CD4-positive, alpha-beta T cell (primary cell): ENCODE measurements at regions of chr6 and their contacts with region 1.

Region 1: DNA sequence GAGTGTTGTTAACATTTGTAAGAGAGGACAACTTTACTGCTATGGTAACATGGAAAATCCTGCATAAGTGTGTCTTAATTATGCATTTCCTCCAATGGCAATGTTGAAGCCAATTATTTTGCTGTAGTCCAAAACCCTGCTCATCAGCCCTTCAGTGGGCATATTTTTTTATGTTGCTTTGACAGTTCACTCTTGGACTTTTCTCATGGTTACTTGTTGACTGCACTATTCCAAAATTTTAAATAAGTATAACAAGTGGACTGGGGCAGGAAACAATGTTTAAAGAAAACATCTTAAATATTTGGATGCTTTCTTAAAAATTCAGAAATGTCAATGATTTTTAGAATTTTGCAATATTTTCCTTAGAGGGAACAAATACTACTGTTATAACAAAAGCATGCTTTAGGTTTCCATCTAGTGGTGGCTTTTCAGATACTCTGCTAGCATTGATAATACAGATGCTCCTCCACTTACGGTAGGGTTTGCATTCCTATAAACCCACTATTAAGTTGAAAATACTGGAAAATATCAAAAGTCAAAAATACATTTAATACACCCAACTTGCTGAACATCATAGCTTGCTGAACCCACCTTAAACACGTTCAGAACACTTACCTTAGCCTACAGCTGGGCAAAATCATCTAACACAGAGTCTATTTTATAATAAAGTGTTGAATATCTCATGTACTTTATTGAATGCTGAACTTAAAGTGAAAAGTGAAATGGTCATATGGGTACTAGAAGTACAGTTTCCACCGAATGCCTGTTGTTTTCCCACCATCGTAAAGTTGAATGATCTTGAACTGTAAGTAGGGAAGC is 86.4 kb downstream of the ADGRG6 start:
- DNase-seq: peak in 3 of 14 experiments; percentile 42 to 56 (median 50)
- ATAC-seq: peak; percentile 57
- H3K4me3 ChIP-seq: no peak overlapping the region
- H3K4me3 Mint-ChIP-seq: no peak overlapping the region
- H3K27ac ChIP-seq: no peak overlapping the region
- H3K27ac Mint-ChIP-seq: no peak overlapping the region
- H3K4me1 ChIP-seq: no peaks in the 10 kb centered on the region
- H3K4me1 Mint-ChIP-seq: peaks cover 14% of the 10 kb centered on the region
- H3K27me3 ChIP-seq: no peaks in the 10 kb centered on the region
- H3K27me3 Mint-ChIP-seq: no peaks in the 10 kb centered on the region
- CTCF ChIP-seq: peak; percentile 74

Region 2: GRCh38 chr6:141988954-141989705 is 399.1 kb before region 1 on chr6:
- CTCF ChIA-PET with region 1: no interaction called
- POLR2A ChIA-PET with region 1: no interaction called
- intact Hi-C with region 1: no loop called
- DNase-seq: peak in 6 of 14 experiments; percentile 1 to 51 (median 26)
- ATAC-seq: no peak
- H3K4me3 ChIP-seq: no peak overlapping the region
- H3K4me3 Mint-ChIP-seq: no peak overlapping the region
- H3K27ac ChIP-seq: no peak overlapping the region
- H3K27ac Mint-ChIP-seq: no peak overlapping the region
- H3K4me1 ChIP-seq: no peaks in the 10 kb centered on the region
- H3K4me1 Mint-ChIP-seq: no peaks in the 10 kb centered on the region
- H3K27me3 ChIP-seq: peaks cover 0 to 3% of the 10 kb centered on the region in 2 experiments
- H3K27me3 Mint-ChIP-seq: peaks cover 7% of the 10 kb centered on the region
- CTCF ChIP-seq: peak; percentile 38

Region 3: DNA sequence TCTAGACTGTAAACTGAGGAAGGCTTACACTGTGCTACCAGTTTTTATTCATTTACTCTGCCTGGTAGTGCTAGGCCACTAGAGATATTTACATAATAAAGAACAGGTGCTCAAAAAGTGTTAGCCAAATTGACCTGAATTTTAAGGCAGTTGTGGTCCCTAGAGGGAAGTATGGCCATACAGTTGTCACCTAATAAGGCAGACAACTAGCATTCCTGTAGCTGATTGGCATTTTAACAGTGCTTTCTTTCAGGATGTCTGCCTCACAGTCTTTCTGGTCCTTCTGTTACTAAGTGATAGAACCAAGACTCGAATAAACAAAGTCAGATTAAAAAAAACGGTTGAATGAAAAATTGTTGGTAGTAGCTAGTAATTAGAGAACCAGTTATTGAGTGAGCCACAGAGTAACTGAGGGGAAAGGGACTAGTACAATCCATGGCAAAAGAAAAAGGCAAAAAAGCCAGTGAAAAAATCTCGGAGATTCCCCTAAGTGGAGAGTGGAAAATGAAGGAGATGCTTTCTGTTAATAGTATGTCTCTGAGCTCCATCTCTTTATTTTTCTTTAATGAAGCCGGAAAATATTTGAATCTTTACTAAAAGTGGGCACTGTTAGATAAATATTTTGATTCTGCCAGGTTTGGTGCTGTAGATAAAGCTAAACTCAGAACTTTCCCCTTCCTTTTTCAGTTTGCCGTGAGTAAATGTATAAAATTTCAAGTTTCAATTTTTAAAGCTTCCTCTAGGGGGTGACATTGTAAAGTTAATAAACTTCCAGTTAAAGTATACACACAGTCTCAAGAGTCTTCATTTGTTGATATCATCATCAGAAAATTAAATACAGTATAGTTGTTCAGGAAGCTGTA is 232.1 kb before region 1 on chr6:
- CTCF ChIA-PET with region 1: no interaction called
- POLR2A ChIA-PET with region 1: interaction called, 3 read pairs
- intact Hi-C with region 1: loop called (anchors 5 kb)
- DNase-seq: peak in 3 of 14 experiments; percentile 38 to 48 (median 45)
- ATAC-seq: peak; percentile 76
- H3K4me3 ChIP-seq: no peak overlapping the region
- H3K4me3 Mint-ChIP-seq: no peak overlapping the region
- H3K27ac ChIP-seq: no peak overlapping the region
- H3K27ac Mint-ChIP-seq: peak overlapping the region; percentile 28
- H3K4me1 ChIP-seq: peaks cover 4% of the 10 kb centered on the region
- H3K4me1 Mint-ChIP-seq: peaks cover 67% of the 10 kb centered on the region
- H3K27me3 ChIP-seq: no peaks in the 10 kb centered on the region
- H3K27me3 Mint-ChIP-seq: no peaks in the 10 kb centered on the region
- CTCF ChIP-seq: peak; percentile 68

Region 4: DNA sequence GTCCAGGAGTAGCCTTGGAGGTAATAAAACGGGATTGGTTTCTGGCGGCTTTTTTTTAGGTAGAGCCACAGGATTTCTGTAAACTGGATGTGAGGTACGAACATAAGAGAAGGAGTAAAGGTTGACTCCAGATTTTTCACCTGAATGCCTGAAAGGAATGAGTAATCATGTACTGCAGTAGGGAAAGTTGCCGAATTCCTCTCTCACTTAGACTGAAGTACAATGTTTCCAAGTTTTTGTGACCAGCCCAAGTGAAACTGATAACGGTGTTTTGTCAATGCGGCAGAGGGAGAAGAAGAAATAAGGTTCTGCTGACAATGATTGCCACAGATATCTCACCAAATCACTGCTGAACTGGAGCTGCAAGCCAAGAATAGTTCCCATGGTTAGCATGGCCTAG is 166.2 kb before region 1 on chr6:
- CTCF ChIA-PET with region 1: no interaction called
- POLR2A ChIA-PET with region 1: no interaction called
- intact Hi-C with region 1: loop called in 1 of 2 experiments (anchors 10 kb)
- DNase-seq: no peak
- ATAC-seq: no peak
- H3K4me3 ChIP-seq: no peak overlapping the region
- H3K4me3 Mint-ChIP-seq: no peak overlapping the region
- H3K27ac ChIP-seq: no peak overlapping the region
- H3K27ac Mint-ChIP-seq: peak overlapping the region; percentile 15
- H3K4me1 ChIP-seq: no peaks in the 10 kb centered on the region
- H3K4me1 Mint-ChIP-seq: no peaks in the 10 kb centered on the region
- H3K27me3 ChIP-seq: no peaks in the 10 kb centered on the region
- H3K27me3 Mint-ChIP-seq: no peaks in the 10 kb centered on the region
- CTCF ChIP-seq: no peak

Region 5: GRCh38 chr6:142255785-142256184 is 132.4 kb before region 1 on chr6:
- CTCF ChIA-PET with region 1: no interaction called
- POLR2A ChIA-PET with region 1: no interaction called
- intact Hi-C with region 1: no loop called
- DNase-seq: no peak
- ATAC-seq: no peak
- H3K4me3 ChIP-seq: no peak overlapping the region
- H3K4me3 Mint-ChIP-seq: no peak overlapping the region
- H3K27ac ChIP-seq: no peak overlapping the region
- H3K27ac Mint-ChIP-seq: no peak overlapping the region
- H3K4me1 ChIP-seq: no peaks in the 10 kb centered on the region
- H3K4me1 Mint-ChIP-seq: no peaks in the 10 kb centered on the region
- H3K27me3 ChIP-seq: no peaks in the 10 kb centered on the region
- H3K27me3 Mint-ChIP-seq: peaks cover 6% of the 10 kb centered on the region
- CTCF ChIP-seq: no peak

Region 6: GRCh38 chr6:142372348-142372747 is 15.9 kb before region 1 on chr6:
- CTCF ChIA-PET with region 1: no interaction called
- POLR2A ChIA-PET with region 1: no interaction called
- intact Hi-C with region 1: no loop called
- DNase-seq: no peak
- ATAC-seq: no peak
- H3K4me3 ChIP-seq: no peak overlapping the region
- H3K4me3 Mint-ChIP-seq: no peak overlapping the region
- H3K27ac ChIP-seq: no peak overlapping the region
- H3K27ac Mint-ChIP-seq: no peak overlapping the region
- H3K4me1 ChIP-seq: no peaks in the 10 kb centered on the region
- H3K4me1 Mint-ChIP-seq: no peaks in the 10 kb centered on the region
- H3K27me3 ChIP-seq: no peaks in the 10 kb centered on the region
- H3K27me3 Mint-ChIP-seq: peaks cover 3% of the 10 kb centered on the region
- CTCF ChIP-seq: no peak